CD8-positive, alpha-beta T cell (primary cell): ENCODE measurements at regions of chr22 and their contacts with region 1.

Region 1: DNA sequence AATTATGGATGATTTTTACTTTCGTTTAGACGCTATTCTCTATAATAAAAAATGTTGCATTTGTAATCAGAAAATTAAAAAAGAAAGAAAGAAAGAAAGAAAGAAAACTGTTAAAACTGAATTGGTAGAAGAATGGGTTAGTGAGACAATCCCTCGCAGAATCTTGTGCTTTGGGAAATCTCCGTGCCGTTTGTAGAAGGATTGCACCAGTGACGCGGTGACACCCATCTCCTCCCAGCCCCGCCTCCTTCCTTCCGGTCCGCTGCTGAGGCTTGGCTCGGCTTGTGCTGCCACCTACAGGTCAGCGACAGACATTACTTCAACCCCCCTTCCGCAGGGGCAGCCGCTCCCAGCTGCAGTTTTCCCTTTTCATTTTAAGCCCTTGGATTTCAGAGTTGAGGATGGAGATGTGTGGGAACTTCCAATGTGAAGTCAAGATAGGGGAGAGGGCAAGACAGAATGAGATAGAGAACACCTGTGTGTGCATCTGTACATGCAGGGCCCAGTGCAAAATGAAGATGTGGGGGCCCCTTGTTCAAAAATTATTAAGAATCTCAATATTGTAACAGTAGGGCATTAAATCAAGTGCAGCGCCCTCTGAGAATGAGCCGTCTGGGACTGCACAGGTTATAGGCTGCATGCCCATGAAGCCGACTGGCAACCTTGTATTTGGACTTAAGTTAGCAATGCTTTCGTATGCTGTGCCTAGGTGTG is 41.1 kb downstream of the TST start:
- DNase-seq: peak; percentile 78 to 95 (median 91)
- ATAC-seq: peak; percentile 90
- H3K4me3 ChIP-seq: peak overlapping the region; percentile 50 to 70
- H3K4me3 Mint-ChIP-seq: peak overlapping the region; percentile 97
- H3K27ac ChIP-seq: peak overlapping the region; percentile 64 to 70
- H3K27ac Mint-ChIP-seq: peak overlapping the region; percentile 95
- H3K4me1 ChIP-seq: peaks cover 4% of the 10 kb centered on the region
- H3K4me1 Mint-ChIP-seq: peaks cover 6% of the 10 kb centered on the region
- H3K27me3 ChIP-seq: no peaks in the 10 kb centered on the region
- H3K27me3 Mint-ChIP-seq: no peaks in the 10 kb centered on the region
- CTCF ChIP-seq: peak; percentile 69

Region 2: GRCh38 chr22:36757668-36758211 is 220.4 kb before region 1 on chr22:
- CTCF ChIA-PET with region 1: interaction called, 27 read pairs
- POLR2A ChIA-PET with region 1: no interaction called
- intact Hi-C with region 1: loop called in 1 of 2 experiments (anchors 2 kb)
- DNase-seq: peak; percentile 49 to 82 (median 73)
- ATAC-seq: peak; percentile 67
- H3K4me3 ChIP-seq: no peak overlapping the region
- H3K4me3 Mint-ChIP-seq: no peak overlapping the region
- H3K27ac ChIP-seq: no peak overlapping the region
- H3K27ac Mint-ChIP-seq: no peak overlapping the region
- H3K4me1 ChIP-seq: peaks cover 4% of the 10 kb centered on the region
- H3K4me1 Mint-ChIP-seq: no peaks in the 10 kb centered on the region
- H3K27me3 ChIP-seq: no peaks in the 10 kb centered on the region
- H3K27me3 Mint-ChIP-seq: peaks cover 13% of the 10 kb centered on the region
- CTCF ChIP-seq: peak; percentile 78

Region 3: GRCh38 chr22:36781656-36782627 is 196.2 kb before region 1 on chr22:
- CTCF ChIA-PET with region 1: interaction called, 13 read pairs
- POLR2A ChIA-PET with region 1: interaction called, 4 read pairs
- intact Hi-C with region 1: loop called (anchors 1 kb)
- DNase-seq: peak; percentile 71 to 93 (median 85)
- ATAC-seq: peak; percentile 96
- H3K4me3 ChIP-seq: no peak overlapping the region
- H3K4me3 Mint-ChIP-seq: no peak overlapping the region
- H3K27ac ChIP-seq: no peak overlapping the region
- H3K27ac Mint-ChIP-seq: peak overlapping the region; percentile 41
- H3K4me1 ChIP-seq: peaks cover 11% of the 10 kb centered on the region
- H3K4me1 Mint-ChIP-seq: peaks cover 16% of the 10 kb centered on the region
- H3K27me3 ChIP-seq: peaks cover 0 to 2% of the 10 kb centered on the region in 2 experiments
- H3K27me3 Mint-ChIP-seq: peaks cover 2% of the 10 kb centered on the region
- CTCF ChIP-seq: peak; percentile 95

Region 4: GRCh38 chr22:36816636-36817524 is 161.2 kb before region 1 on chr22 and contains the start of gene PVALB:
- CTCF ChIA-PET with region 1: no interaction called
- POLR2A ChIA-PET with region 1: no interaction called
- intact Hi-C with region 1: no loop called
- DNase-seq: peak in 1 of 9 experiments; percentile 13
- ATAC-seq: no peak
- H3K4me3 ChIP-seq: no peak within 1 kb of the TSS
- H3K4me3 Mint-ChIP-seq: peak within 1 kb of the TSS; percentile 18
- H3K27ac ChIP-seq: no peak within 1 kb of the TSS
- H3K27ac Mint-ChIP-seq: no peak within 1 kb of the TSS
- H3K4me1 ChIP-seq: peaks cover 16% of the 10 kb centered on the region
- H3K4me1 Mint-ChIP-seq: peaks cover 4% of the 10 kb centered on the region
- H3K27me3 ChIP-seq: peaks cover 8 to 24% of the 10 kb centered on the region in 2 experiments
- H3K27me3 Mint-ChIP-seq: peaks cover 63% of the 10 kb centered on the region
- CTCF ChIP-seq: no peak
- total RNA-seq, gene PVALB: not detected

Region 5: DNA sequence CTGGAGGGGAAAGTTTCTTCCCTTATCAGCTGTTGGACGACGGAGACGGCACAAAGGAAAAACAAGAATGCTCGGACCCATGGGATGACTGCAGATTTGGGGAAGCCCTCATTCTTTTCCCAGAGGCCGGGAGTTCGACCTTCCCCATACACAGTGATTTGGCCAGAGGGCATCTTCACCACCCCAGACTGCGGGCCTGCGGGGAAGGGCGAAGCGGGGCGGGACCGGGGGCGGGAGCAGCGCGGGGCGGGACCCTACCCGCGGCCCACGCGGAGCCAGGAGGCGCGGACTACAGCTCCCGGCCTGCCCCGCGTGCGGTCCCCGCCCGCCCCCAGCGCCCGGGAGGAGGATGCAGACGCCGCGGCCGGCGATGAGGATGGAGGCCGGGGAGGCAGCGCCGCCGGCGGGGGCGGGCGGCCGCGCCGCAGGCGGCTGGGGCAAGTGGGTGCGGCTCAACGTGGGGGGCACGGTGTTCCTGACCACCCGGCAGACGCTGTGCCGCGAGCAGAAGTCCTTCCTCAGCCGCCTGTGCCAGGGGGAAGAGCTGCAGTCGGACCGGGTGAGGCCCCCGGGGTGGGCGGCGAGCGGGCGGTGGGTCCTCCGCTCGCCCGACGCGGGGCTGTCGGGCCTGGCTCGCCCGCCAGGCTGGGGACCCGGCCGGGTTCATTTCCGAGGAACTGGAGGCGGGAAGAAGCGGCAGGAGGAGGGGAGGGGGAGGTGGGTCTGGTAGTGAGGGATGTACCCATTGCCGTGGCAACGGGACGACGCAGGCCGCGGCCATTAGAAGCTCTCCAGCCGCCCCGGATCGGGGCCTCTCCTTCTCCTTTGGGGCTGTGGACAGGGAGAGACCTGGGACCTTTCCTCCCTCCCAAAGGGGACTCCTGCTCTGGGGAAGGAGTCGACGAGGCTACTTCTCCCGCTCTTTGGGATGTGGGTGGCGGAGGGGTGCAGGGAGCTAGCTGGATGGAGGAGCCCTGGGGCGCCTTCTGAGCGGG is 73.6 kb after region 1 on chr22 and contains the start of gene KCTD17:
- CTCF ChIA-PET with region 1: interaction called, 4 read pairs
- POLR2A ChIA-PET with region 1: no interaction called
- intact Hi-C with region 1: loop called in 1 of 2 experiments (anchors 1 kb)
- DNase-seq: peak; percentile 40 to 84 (median 72)
- ATAC-seq: peak; percentile 100
- H3K4me3 ChIP-seq: peak within 1 kb of the TSS; percentile 46 to 65
- H3K4me3 Mint-ChIP-seq: peak within 1 kb of the TSS; percentile 84
- H3K27ac ChIP-seq: peak within 1 kb of the TSS in 1 of 2 experiments; percentile 37
- H3K27ac Mint-ChIP-seq: no peak within 1 kb of the TSS
- H3K4me1 ChIP-seq: peaks cover 11% of the 10 kb centered on the region
- H3K4me1 Mint-ChIP-seq: peaks cover 10% of the 10 kb centered on the region
- H3K27me3 ChIP-seq: no peaks in the 10 kb centered on the region
- H3K27me3 Mint-ChIP-seq: no peaks in the 10 kb centered on the region
- CTCF ChIP-seq: no peak
- total RNA-seq, gene KCTD17: 18.6 to 22.8 TPM

Region 6: GRCh38 chr22:37077884-37078485 is 99.9 kb after region 1 on chr22:
- CTCF ChIA-PET with region 1: no interaction called
- POLR2A ChIA-PET with region 1: no interaction called
- intact Hi-C with region 1: no loop called
- DNase-seq: peak; percentile 68 to 93 (median 83)
- ATAC-seq: peak; percentile 14
- H3K4me3 ChIP-seq: no peak overlapping the region
- H3K4me3 Mint-ChIP-seq: peak overlapping the region; percentile 47
- H3K27ac ChIP-seq: peak overlapping the region in 1 of 2 experiments; percentile 51
- H3K27ac Mint-ChIP-seq: peak overlapping the region; percentile 99
- H3K4me1 ChIP-seq: peaks cover 39% of the 10 kb centered on the region
- H3K4me1 Mint-ChIP-seq: peaks cover 31% of the 10 kb centered on the region
- H3K27me3 ChIP-seq: no peaks in the 10 kb centered on the region
- H3K27me3 Mint-ChIP-seq: peaks cover 3% of the 10 kb centered on the region
- CTCF ChIP-seq: peak; percentile 98

Region 7: DNA sequence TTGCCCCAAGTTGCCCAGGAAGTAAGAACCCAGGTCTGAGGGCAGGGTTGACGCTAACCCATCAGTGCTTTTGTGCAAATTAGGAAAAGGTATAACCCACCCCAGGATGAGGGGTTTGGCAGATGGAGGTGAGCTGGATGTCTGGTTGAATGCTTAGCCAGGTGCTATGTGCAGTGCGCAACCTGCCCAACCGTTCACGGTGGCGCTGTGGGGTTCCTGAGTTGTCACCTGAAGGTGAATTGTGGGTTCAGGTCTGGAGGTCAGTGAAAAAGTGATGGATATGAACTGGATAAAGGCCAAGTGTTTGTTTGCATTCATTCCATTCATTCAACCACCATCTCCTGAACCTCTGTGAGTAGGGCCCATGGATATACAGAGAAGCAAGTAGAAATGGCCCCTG is 616.1 kb after region 1 on chr22:
- CTCF ChIA-PET with region 1: no interaction called
- POLR2A ChIA-PET with region 1: no interaction called
- intact Hi-C with region 1: loop called in 1 of 2 experiments (anchors 5 kb)
- DNase-seq: no peak
- ATAC-seq: no peak
- H3K4me3 ChIP-seq: no peak overlapping the region
- H3K4me3 Mint-ChIP-seq: no peak overlapping the region
- H3K27ac ChIP-seq: no peak overlapping the region
- H3K27ac Mint-ChIP-seq: no peak overlapping the region
- H3K4me1 ChIP-seq: peaks cover 6% of the 10 kb centered on the region
- H3K4me1 Mint-ChIP-seq: peaks cover 12% of the 10 kb centered on the region
- H3K27me3 ChIP-seq: no peaks in the 10 kb centered on the region
- H3K27me3 Mint-ChIP-seq: no peaks in the 10 kb centered on the region
- CTCF ChIP-seq: no peak